ENCODE measurements at regions of chr20 and their contacts with region 1.

Region 1: GRCh38 chr20:3051385-3052019 is 5.7 kb downstream of the MRPS26 start:
- DNase-seq: no peak
- ATAC-seq: peak; percentile 46; the same call in 1 of the 2 replicates
- H3K4me3 ChIP-seq: no peak overlapping the region
- H3K27ac ChIP-seq: no peak overlapping the region
- H3K4me1 ChIP-seq: peaks cover 0 to 18% of the 10 kb centered on the region in 2 experiments; a peak in 2 of 4 replicates
- H3K27me3 ChIP-seq: no peaks in the 10 kb centered on the region
- CTCF ChIP-seq: peak in 2 of 3 experiments; percentile 15 to 27; a peak in 1 of 6 replicates
- POLR2A ChIP-seq: no peak
- RAD21 ChIP-seq: no peak

Region 2: DNA sequence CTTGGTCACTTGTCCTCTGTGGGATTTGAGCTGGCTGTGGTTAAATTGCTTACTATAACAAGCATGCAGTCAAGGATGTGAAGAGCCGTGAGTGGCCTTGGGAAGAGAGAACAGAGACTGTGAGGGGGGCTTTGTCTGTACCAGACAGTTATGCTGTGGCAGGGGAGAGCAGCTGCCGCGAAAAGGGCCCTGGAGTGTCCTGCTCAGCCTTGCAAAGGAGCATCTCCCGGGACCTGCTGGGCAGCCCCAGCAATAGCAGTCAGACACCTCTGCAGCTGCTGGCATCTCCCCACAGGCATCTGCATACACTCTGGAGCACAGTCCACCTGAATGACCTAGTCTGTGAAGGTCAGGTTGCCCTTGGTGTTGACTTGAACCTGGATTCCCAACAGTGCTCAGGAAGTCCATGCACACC is 352.6 kb before region 1 on chr20:
- CTCF ChIA-PET with region 1: no interaction called
- POLR2A ChIA-PET with region 1: no interaction called
- RAD21 ChIA-PET with region 1: no interaction called
- intact Hi-C with region 1: no loop called
- DNase-seq: no peak
- ATAC-seq: no peak
- H3K4me3 ChIP-seq: no peak overlapping the region
- H3K27ac ChIP-seq: no peak overlapping the region
- H3K4me1 ChIP-seq: peaks cover 2 to 4% of the 10 kb centered on the region in 2 experiments; a peak in 2 of 4 replicates
- H3K27me3 ChIP-seq: no peaks in the 10 kb centered on the region
- CTCF ChIP-seq: no peak
- POLR2A ChIP-seq: no peak
- RAD21 ChIP-seq: no peak

Region 3: DNA sequence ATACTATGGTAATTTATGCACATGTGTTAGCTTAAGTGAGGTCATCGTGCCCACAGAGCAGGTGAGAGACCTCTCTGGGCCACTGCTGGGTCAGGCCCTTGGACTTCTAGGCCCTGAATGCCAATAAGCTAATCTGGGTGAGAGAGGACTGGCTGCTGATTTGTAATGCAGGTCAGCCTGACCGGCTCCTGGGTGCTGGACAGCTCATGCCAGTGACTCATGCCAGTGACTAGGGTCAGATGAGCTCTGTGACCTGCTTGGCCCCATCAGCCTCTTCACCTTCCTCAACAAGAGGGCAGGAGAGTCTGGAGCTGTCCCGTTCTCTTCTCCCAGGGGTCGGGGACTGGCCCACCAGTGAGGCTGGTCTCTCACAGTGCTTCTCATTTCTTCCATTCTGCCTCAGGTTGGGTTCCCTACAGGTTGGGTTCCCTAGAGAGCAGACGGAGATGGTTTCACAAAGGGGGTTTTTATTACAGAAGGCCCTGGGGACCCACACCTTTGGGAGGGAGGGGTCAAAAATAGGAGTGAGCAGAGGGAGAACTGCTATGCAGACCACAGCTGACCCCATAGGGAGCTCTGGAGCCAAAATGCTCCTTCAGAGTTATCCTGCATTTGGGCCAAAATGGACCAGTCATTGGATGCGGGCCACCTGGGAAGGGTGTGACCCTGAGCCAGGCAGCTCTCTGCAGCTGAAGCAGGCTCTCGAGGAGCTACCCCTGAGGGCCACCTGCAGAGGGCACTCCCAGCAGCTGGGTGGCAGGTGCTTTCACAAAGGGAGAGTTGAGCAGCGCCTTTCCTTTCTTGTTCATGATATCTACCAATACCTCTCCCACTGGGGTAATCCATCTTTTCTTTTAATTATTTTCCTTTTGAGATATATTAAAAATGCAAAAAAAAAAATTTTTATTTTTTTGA is 17.7 kb after region 1 on chr20:
- CTCF ChIA-PET with region 1: interaction called, 12 read pairs
- POLR2A ChIA-PET with region 1: no interaction called
- RAD21 ChIA-PET with region 1: no interaction called
- intact Hi-C with region 1: no loop called
- DNase-seq: no peak
- ATAC-seq: peak; percentile 81
- H3K4me3 ChIP-seq: no peak overlapping the region
- H3K27ac ChIP-seq: no peak overlapping the region
- H3K4me1 ChIP-seq: peaks cover 7 to 15% of the 10 kb centered on the region in 2 experiments; a peak in 2 of 4 replicates
- H3K27me3 ChIP-seq: no peaks in the 10 kb centered on the region
- CTCF ChIP-seq: peak; percentile 30 to 50 (median 41); a peak in 5 of 6 replicates
- POLR2A ChIP-seq: no peak
- RAD21 ChIP-seq: peak; percentile 48; the same call in 1 of the 2 replicates

Region 4: DNA sequence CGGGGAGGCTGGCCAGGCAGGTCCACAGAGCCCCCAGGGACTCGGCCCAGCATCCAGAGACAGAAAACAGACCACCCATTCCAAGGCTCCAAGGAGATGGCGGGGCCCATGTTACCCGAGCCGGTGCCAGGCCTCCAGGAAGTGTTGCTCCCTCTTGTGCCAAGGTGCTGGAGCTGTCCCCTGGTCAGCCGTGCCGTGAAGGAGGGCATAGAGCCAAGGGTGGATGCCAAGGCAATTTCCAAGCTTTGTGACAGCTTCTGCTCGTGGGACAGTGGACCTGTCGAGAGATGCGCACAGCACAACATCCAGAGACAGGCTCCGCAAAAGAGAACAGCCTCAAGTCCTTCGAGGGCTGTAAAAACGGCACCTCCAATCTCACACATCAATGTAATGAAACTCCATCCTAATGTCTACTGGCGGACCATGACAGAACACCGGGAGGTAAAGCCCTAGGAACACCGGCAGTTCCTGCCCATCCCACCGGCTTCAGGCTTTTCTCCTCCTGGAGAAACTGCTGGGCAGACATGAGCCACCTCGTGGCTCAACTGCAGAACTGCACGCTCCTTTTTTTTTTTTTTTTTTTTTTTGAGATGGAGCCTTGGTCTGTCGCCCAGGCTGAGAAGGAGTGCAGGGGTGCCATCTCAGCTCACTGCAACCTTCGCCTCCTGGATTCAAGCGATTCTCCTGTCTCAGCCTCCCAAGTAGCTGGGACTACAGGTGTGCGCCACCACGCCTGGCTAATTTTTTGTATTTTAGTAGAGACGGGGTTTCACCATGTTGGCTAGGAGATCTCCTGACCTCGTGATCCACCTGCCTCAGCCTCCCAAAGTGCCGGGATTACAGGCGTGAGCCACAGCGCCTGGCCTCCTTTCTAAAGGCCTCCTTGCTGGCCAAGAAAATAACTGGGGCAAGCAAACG is 63.9 kb after region 1 on chr20:
- CTCF ChIA-PET with region 1: interaction called, 7 read pairs
- POLR2A ChIA-PET with region 1: no interaction called
- RAD21 ChIA-PET with region 1: no interaction called
- intact Hi-C with region 1: loop called (anchors 1 kb)
- DNase-seq: peak; percentile 22
- ATAC-seq: peak; percentile 65; the same call in 1 of the 2 replicates
- H3K4me3 ChIP-seq: no peak overlapping the region
- H3K27ac ChIP-seq: no peak overlapping the region
- H3K4me1 ChIP-seq: peaks cover 0 to 8% of the 10 kb centered on the region in 2 experiments; a peak in 1 of 4 replicates
- H3K27me3 ChIP-seq: no peaks in the 10 kb centered on the region
- CTCF ChIP-seq: peak; percentile 61 to 80 (median 66); a peak in 5 of 6 replicates
- POLR2A ChIP-seq: no peak
- RAD21 ChIP-seq: peak; percentile 51

Region 5: DNA sequence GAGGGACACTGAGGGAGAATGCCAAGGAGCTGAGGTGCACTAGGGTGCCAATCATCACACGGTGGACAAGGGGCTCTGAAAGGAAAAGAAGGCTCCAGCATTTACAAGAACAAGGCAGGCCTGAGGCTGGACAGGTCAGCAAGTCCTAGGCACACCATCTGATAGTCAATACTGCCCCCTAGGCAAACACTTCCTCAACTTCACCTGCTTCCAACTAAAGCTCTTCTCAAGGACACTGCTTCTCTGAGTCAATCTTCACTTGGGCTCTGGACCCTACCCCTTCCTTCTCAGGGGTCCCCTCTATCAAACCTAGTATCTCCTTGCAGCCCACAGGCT is 225.1 kb after region 1 on chr20:
- CTCF ChIA-PET with region 1: interaction called, 6 read pairs
- POLR2A ChIA-PET with region 1: no interaction called
- RAD21 ChIA-PET with region 1: no interaction called
- intact Hi-C with region 1: loop called (anchors 2 kb)
- DNase-seq: peak; percentile 35
- ATAC-seq: peak; percentile 92
- H3K4me3 ChIP-seq: no peak overlapping the region
- H3K27ac ChIP-seq: no peak overlapping the region
- H3K4me1 ChIP-seq: no peaks in the 10 kb centered on the region
- H3K27me3 ChIP-seq: no peaks in the 10 kb centered on the region
- CTCF ChIP-seq: peak; percentile 48 to 65 (median 51)
- POLR2A ChIP-seq: no peak
- RAD21 ChIP-seq: peak; percentile 67